ENCODE measurements at regions of chrX and their contacts with region 1.

Region 1: GRCh38 chrX:9708904-9709553 is 56.6 kb downstream of the GPR143 start:
- DNase-seq: peak; percentile 43 to 96 (median 76)

Region 2: DNA sequence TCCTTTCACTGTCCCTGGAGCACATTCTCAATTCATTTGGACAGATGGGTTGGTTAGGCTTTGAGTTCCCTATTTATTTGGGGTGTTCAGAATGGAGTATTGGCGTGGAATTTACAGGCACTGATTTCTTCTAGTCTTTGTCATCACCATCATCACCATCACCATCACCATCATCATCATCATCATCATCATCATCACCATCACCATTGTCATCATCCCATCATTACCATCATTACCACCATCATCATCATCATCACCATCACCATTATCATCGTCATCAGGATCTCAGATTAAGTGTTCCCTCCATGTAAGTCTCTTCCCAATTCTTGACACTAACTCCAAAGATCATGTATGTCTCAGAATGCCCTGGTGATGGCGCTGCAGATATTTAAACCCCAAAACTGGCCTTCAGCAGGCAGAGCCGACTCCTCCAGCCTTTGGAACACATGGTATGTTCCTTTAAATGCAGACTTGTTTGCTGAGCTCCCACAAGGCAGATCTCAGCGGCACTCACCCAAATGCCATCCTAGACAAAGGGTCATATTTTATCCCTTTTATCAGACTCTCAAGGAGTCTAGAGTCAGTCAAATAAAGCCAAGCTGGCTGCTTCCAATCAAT is 888.0 kb before region 1 on chrX:
- intact Hi-C with region 1: loop called (anchors 2 kb)
- DNase-seq: peak in 2 of 10 donors; percentile 7 to 28

Region 3: GRCh38 chrX:9530848-9531274 is 178.2 kb before region 1 on chrX:
- intact Hi-C with region 1: loop called (anchors 10 kb)
- DNase-seq: peak in 8 of 10 donors; percentile 29 to 92 (median 56)

Region 4: GRCh38 chrX:9745417-9746115 is 36.5 kb after region 1 on chrX:
- intact Hi-C with region 1: no loop called
- DNase-seq: no peak